ENCODE measurements at regions of chr12 and their contacts with region 1.

Region 1: GRCh38 chr12:127559349-127560040 is 707.5 kb upstream of the TMEM132C start:
- DNase-seq: peak; percentile 81
- H3K4me3 Mint-ChIP-seq: peak overlapping the region; percentile 70
- H3K27ac Mint-ChIP-seq: peak overlapping the region; percentile 96
- H3K4me1 Mint-ChIP-seq: peaks cover 65% of the 10 kb centered on the region
- H3K27me3 Mint-ChIP-seq: no peaks in the 10 kb centered on the region

Region 2: GRCh38 chr12:127083008-127083949 is 476.2 kb before region 1 on chr12:
- intact Hi-C with region 1: loop called (anchors 2 kb)
- DNase-seq: peak; percentile 17
- H3K4me3 Mint-ChIP-seq: peak overlapping the region; percentile 56
- H3K27ac Mint-ChIP-seq: peak overlapping the region; percentile 26
- H3K4me1 Mint-ChIP-seq: peaks cover 14% of the 10 kb centered on the region
- H3K27me3 Mint-ChIP-seq: peaks cover 2% of the 10 kb centered on the region

Region 3: GRCh38 chr12:127165567-127166392 is 393.7 kb before region 1 on chr12:
- intact Hi-C with region 1: loop called (anchors 5 kb)
- DNase-seq: peak; percentile 77
- H3K4me3 Mint-ChIP-seq: peak overlapping the region; percentile 81
- H3K27ac Mint-ChIP-seq: peak overlapping the region; percentile 53
- H3K4me1 Mint-ChIP-seq: peaks cover 26% of the 10 kb centered on the region
- H3K27me3 Mint-ChIP-seq: peaks cover 15% of the 10 kb centered on the region

Region 4: GRCh38 chr12:127677537-127678131 is 118.1 kb after region 1 on chr12:
- intact Hi-C with region 1: loop called (anchors 5 kb)
- DNase-seq: peak; percentile 21
- H3K4me3 Mint-ChIP-seq: no peak overlapping the region
- H3K27ac Mint-ChIP-seq: no peak overlapping the region
- H3K4me1 Mint-ChIP-seq: no peaks in the 10 kb centered on the region
- H3K27me3 Mint-ChIP-seq: no peaks in the 10 kb centered on the region

Region 5: GRCh38 chr12:128823916-128824839 is 1264.7 kb after region 1 on chr12 and contains the start of gene SLC15A4:
- intact Hi-C with region 1: loop called (anchors 5 kb)
- DNase-seq: peak; percentile 94
- H3K4me3 Mint-ChIP-seq: peak within 1 kb of the TSS; percentile 87
- H3K27ac Mint-ChIP-seq: peak within 1 kb of the TSS; percentile 81
- H3K4me1 Mint-ChIP-seq: peaks cover 43% of the 10 kb centered on the region
- H3K27me3 Mint-ChIP-seq: no peaks in the 10 kb centered on the region
- total RNA-seq, gene SLC15A4: 33.0 and 33.7 TPM in 2 replicates